GM23248 (cell line): ENCODE measurements at regions of chr11 and their contacts with region 1.

Region 1: DNA sequence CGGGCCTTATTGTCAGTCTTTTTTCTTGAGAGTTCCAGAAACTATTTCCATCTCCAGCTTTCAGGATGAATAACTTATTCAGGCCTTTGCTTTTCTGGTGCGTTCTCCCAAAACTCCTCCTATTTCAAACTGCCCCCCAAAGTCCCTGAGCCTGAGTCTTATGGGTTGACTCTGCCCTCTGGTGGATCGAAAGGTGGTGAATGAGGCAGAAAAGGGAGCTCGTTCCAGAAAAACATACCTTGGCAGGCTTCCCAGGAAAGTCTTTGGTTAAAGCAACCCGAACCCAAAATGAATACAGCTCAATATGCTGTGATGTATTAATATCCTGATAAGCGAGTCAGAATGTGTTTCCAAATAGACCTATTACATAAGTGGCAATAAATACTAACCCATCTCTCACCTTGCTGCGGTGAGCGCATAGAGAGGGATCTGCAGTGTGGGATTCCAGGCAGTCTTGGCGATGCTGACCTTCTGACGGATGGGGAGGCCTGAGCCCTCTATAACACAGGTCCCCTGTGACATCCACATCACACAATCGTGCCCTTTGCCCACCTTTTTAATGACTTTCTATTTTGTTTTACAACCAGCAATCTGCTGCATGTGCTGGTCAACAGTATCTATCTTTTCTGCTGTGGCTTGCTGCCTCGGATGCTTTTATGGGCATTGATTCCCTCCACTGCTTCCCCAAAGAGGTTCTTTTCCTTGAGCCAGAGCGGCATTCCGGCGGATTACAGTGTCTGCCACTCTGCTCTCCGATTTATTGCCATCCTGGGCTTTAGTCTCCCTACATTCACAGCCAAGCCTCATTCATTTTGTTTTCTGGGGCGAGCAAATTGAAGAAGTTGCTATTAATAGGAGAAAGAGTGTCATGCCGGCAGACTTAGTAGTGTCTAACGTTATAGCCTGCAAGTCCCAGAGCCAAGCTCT is 756.8 kb downstream of the NTM start:
- DNase-seq: peak; percentile 94
- H3K4me3 ChIP-seq: peak overlapping the region; percentile 65
- H3K27ac ChIP-seq: peak overlapping the region; percentile 60
- H3K4me1 ChIP-seq: peaks cover 17% of the 10 kb centered on the region
- H3K27me3 ChIP-seq: no peaks in the 10 kb centered on the region

Region 2: DNA sequence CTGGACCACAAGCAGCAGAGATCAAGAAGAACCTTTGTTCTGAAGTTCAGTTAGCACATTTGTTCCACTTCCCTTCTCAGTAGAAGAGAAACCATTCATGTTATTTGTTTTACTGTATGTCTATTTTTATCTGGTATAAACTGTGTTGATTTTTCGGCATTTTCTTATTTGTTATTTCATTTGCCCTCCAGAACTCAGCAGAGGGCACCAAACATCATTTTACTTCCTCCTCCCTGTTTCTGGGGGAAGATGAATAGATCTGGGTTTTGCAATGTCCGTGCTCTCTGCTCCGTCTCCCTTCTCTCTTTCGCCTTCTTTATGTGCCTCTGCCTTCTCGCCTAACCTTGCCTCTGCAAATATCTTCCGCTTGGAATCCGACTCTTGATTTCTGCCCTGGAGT is 389.9 kb before region 1 on chr11:
- in situ Hi-C with region 1: loop called (anchors 10 kb)
- DNase-seq: peak; percentile 70
- H3K4me3 ChIP-seq: no peak overlapping the region
- H3K27ac ChIP-seq: no peak overlapping the region
- H3K4me1 ChIP-seq: peaks cover 4% of the 10 kb centered on the region
- H3K27me3 ChIP-seq: no peaks in the 10 kb centered on the region

Region 3: GRCh38 chr11:131867457-131868257 is 259.6 kb before region 1 on chr11:
- in situ Hi-C with region 1: loop called (anchors 10 kb)
- DNase-seq: peak; percentile 86
- H3K4me3 ChIP-seq: no peak overlapping the region
- H3K27ac ChIP-seq: no peak overlapping the region
- H3K4me1 ChIP-seq: no peaks in the 10 kb centered on the region
- H3K27me3 ChIP-seq: no peaks in the 10 kb centered on the region

Region 4: GRCh38 chr11:131924457-131925201 is 202.6 kb before region 1 on chr11:
- in situ Hi-C with region 1: loop called (anchors 10 kb)
- DNase-seq: peak; percentile 45
- H3K4me3 ChIP-seq: no peak overlapping the region
- H3K27ac ChIP-seq: no peak overlapping the region
- H3K4me1 ChIP-seq: peaks cover 11% of the 10 kb centered on the region
- H3K27me3 ChIP-seq: no peaks in the 10 kb centered on the region